AG04449 (cell line): ENCODE measurements at regions of chr5 and their contacts with region 1.

Region 1: DNA sequence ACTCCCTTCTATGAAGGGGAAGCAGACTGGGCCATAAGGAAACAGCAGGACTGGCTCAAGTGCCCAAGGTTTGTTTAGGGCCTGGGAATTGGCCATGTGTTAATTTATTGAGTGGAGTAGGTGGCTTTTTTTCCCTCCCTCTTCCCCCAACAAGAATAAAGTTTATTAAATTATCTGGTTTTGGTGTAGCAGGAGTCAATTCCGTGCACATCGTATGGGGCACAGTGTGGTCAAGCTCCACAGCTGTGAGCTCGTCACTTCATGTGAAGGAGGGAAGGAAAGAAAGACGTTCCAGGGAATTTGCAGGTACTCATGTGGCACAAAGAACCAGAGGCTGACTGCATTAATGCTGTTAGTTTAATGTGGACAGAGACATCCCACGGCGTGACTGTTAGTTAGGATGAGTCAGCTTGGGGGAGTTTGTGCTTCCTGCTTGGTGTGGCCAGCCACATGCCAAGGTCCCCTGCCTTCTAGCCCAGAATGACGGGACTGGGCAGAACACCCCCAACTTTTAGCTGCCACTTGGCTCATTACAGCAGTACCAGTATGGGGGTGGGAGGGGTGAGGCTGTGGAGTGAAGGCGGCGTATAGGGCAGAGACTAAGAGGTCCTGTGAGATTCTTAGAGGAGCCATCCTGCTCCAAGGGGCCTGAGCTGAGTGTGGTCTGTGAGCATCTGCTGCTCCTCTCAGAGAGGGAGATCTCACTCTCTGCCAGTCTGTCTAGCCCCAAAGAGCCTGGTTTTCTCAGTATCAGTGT is 33.2 kb downstream of the CSF1R start:
- DNase-seq: no peak
- H3K4me3 ChIP-seq: no peak overlapping the region
- CTCF ChIP-seq: no peak

Region 2: GRCh38 chr5:149765932-149766331 is 287.2 kb before region 1 on chr5:
- CTCF ChIA-PET with region 1: no interaction called
- POLR2A ChIA-PET with region 1: no interaction called
- DNase-seq: no peak
- H3K4me3 ChIP-seq: no peak overlapping the region
- CTCF ChIP-seq: no peak

Region 3: GRCh38 chr5:150065361-150065760 is 12.2 kb after region 1 on chr5:
- CTCF ChIA-PET with region 1: interaction called, 13 read pairs
- POLR2A ChIA-PET with region 1: interaction called, 4 read pairs
- DNase-seq: no peak
- H3K4me3 ChIP-seq: no peak overlapping the region; the same call in 1 of the 2 replicates
- CTCF ChIP-seq: no peak